Activated B cell treated with CpG ODN at 0.5 μM for 24 hours (primary cell): ENCODE measurements at regions of chr10 and their contacts with region 1.

Region 1: GRCh38 chr10:79331709-79332108 is 15.6 kb upstream of the PPIF start:
- DNase-seq: peak; percentile 57
- ATAC-seq: peak; percentile 93
- H3K4me3 Mint-ChIP-seq: peak overlapping the region; percentile 41
- H3K27ac Mint-ChIP-seq: peak overlapping the region; percentile 79
- H3K4me1 Mint-ChIP-seq: peaks cover 24% of the 10 kb centered on the region
- H3K27me3 Mint-ChIP-seq: no peaks in the 10 kb centered on the region
- CTCF ChIP-seq: no peak

Region 2: DNA sequence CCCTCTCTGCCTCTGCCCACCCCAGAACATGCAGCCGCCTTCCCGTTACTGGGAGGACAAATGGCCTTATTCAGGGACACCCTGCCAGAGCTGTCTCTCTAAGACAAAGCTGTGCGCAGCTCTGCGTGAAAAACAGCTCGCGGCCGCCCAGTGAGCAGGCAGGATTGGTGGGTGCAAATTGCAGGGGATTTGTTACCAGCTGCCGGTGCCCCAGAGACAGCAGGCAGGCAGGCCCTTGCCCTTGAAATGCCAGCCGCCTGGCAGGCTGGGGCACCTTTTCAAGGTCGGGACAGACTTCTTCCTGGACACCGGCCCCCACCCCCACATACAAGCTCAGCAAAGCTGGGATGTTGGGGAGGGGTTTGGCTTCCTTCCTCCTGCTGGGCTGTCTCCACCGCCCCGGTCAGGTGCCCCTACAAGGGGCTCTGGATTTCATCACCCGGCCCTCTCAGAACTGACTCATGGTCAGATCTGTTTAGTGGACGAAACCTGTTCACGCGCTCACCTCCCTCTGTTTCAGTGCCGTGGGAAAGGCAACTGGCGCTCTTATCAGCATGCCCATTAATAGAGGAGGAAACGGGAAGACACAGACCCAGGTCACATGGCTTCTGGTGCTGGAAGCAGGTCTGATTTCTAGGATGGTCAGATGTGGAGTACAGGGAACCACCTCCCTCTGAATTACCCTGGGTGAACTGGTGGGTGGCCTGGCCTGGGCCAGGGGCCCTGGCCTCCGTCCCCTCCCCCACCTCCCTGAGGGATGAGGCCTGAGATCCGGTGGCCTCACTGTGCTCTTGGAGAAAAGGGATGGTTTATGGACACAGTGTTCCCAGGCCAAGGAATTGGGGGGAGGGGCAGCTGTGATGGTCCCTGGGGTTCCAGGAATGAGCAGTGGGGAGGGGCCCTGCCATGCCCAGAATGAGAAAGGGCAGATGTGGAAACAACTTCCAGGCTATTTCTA is 108.3 kb before region 1 on chr10:
- CTCF ChIA-PET with region 1: no interaction called
- POLR2A ChIA-PET with region 1: no interaction called
- intact Hi-C with region 1: no loop called
- DNase-seq: no peak
- ATAC-seq: no peak
- H3K4me3 Mint-ChIP-seq: no peak overlapping the region
- H3K27ac Mint-ChIP-seq: no peak overlapping the region
- H3K4me1 Mint-ChIP-seq: peaks cover 5% of the 10 kb centered on the region
- H3K27me3 Mint-ChIP-seq: peaks cover 2% of the 10 kb centered on the region
- CTCF ChIP-seq: no peak

Region 3: DNA sequence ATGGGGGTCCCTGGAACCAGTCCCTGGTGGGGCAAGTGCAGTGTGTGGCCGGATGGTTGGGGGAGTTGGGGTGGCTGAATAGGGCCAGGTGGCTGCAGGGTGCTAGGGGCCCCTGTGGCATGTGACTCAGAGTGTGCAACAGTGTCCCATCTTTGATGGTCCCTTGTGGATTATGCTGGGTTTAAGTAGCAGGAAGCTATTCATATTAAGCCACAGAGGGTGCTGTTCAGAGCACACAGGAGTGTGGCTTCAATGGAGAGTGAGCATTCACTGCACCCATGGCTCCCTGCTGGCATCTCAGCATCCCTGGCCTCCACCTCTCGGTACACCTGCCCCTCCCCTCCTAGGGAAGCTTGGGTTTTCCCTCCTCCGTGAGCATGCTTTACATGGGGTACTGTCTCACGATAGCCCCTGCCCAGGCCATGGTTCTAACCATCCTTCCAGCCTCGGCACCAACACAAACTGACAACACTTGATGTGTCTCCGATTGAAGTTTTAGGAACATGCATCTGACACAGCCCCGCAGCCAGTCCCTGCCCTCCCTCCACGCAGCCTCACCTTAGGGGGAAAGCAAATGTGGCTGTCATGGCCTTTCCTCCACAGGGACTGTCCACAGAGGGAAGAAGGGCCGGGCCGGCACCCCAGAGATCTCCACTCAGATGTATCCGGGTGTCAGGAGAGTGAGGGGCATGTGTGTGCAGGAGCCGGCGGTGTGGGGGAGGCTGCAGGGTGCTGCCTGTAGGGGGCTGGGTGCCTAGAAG is 14.9 kb before region 1 on chr10:
- CTCF ChIA-PET with region 1: no interaction called
- POLR2A ChIA-PET with region 1: interaction called, 34 read pairs
- intact Hi-C with region 1: loop called (anchors 1 kb)
- DNase-seq: peak; percentile 39
- ATAC-seq: peak; percentile 89
- H3K4me3 Mint-ChIP-seq: peak overlapping the region; percentile 48
- H3K27ac Mint-ChIP-seq: peak overlapping the region; percentile 56
- H3K4me1 Mint-ChIP-seq: peaks cover 43% of the 10 kb centered on the region
- H3K27me3 Mint-ChIP-seq: no peaks in the 10 kb centered on the region
- CTCF ChIP-seq: no peak